ENCODE measurements at regions of chr7 and their contacts with region 1.

Region 1: DNA sequence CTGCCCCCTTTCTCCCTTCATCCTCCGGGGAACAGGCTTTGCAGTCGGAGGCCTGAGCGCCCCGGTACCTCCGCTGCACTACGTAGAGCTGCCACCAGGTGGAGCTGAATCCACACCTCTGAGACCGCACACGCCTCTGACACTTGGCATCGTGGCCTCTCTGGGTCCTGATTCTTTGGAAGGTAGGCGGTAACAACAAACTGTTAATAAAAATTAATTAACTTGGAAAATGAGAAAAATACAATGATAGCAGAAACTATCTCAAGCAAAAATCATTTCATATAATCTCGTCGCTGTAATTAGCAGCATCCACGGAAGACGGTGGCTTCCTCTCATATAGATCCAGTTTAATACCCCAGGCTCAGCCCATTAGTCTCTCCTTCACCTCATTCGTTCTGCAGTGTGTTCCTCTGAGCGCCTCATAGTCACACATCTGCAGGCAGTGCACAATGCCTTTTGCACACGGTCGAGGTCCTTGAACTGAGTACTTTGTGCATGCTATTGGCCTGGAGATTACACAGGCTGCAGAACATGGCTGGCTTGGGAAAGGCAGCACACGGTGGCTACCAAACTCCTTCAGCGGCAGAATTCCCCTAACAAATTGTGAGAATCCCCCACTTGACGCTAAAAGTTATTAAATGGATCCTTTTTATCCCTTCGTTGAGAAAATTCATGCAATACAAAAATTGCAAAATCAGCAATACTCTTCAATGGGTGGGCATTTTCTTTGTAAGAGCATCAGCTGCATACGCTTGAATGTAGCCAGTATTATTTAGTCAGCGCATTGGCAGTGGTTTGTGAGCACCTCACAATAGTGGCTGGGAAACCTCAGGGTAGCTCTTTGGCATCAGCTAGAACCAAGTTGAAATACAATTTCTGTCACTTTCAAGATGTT is 18.7 kb downstream of the OR9A2 start:
- DNase-seq: peak; percentile 9
- ATAC-seq: peak; percentile 95
- H3K4me3 ChIP-seq: no peak overlapping the region
- H3K27ac ChIP-seq: no peak overlapping the region
- H3K4me1 ChIP-seq: no peaks in the 10 kb centered on the region
- H3K27me3 ChIP-seq: no peaks in the 10 kb centered on the region; a peak in 1 of 4 replicates
- CTCF ChIP-seq: peak; percentile 92 to 97 (median 94)
- EP300 ChIP-seq: no peak
- POLR2A ChIP-seq: no peak
- RAD21 ChIP-seq: peak; percentile 97

Region 2: DNA sequence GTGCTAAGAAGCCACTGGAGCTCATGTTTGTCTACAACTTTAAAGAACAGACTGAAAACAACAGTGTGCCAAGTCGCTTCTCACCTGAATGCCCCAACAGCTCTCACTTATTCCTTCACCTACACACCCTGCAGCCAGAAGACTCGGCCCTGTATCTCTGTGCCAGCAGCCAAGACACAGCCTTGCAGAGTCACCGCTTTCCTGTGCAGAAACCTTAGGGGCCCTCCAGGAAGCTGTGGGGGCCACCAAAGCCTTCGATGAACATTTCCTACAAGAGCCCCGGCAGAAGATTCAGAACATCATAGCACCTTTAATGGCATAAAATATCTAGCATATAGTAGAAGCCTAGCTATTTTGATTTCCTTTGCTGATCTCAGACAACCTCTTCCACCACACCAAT is 662.4 kb before region 1 on chr7:
- CTCF ChIA-PET with region 1: no interaction called
- POLR2A ChIA-PET with region 1: no interaction called
- RAD21 ChIA-PET with region 1: no interaction called
- SMC1A ChIA-PET with region 1: no interaction called
- in situ Hi-C with region 1: no loop called
- intact Hi-C with region 1: no loop called
- DNase-seq: no peak
- ATAC-seq: no peak
- H3K4me3 ChIP-seq: no peak overlapping the region
- H3K27ac ChIP-seq: no peak overlapping the region
- H3K4me1 ChIP-seq: no peaks in the 10 kb centered on the region
- H3K27me3 ChIP-seq: peaks cover 4 to 7% of the 10 kb centered on the region in 2 experiments; a peak in 3 of 4 replicates
- CTCF ChIP-seq: no peak
- EP300 ChIP-seq: no peak
- POLR2A ChIP-seq: no peak
- RAD21 ChIP-seq: no peak

Region 3: DNA sequence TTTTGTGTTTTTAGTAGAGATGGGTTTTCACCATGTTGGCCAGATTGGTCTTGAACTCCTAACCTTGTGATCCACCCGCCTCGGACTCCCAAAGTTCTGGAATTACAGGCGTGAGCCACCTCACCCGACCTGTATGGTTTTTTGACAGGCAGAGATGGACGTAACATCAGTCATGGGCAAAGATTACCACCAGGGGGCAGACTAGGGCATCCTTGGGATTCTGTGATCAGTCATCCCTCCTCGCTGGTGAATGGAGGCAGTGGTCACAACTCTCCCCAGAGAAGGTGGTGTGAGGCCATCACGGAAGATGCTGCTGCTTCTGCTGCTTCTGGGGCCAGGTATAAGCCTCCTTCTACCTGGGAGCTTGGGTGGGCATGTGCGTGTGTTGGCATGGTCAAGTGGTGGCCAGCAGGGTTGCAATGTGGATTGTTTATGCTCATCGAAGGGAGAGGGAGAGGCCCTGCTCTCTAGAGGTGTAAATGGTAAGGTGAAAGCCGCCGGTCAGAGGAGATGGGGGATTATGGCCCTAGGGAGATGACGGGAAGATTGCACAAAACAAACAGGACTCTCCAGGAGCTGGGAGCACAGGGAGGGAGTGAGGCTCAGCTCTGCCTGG is 381.7 kb before region 1 on chr7:
- CTCF ChIA-PET with region 1: interaction called, 56 read pairs
- POLR2A ChIA-PET with region 1: no interaction called
- RAD21 ChIA-PET with region 1: interaction called, 5 read pairs
- SMC1A ChIA-PET with region 1: interaction called, 23 read pairs
- in situ Hi-C with region 1: loop called (anchors 5 kb)
- intact Hi-C with region 1: no loop called
- DNase-seq: no peak
- ATAC-seq: peak; percentile 96
- H3K4me3 ChIP-seq: no peak overlapping the region
- H3K27ac ChIP-seq: no peak overlapping the region
- H3K4me1 ChIP-seq: no peaks in the 10 kb centered on the region
- H3K27me3 ChIP-seq: peaks cover 0 to 3% of the 10 kb centered on the region in 2 experiments; a peak in 1 of 4 replicates
- CTCF ChIP-seq: peak; percentile 56 to 79 (median 69)
- EP300 ChIP-seq: no peak
- POLR2A ChIP-seq: no peak
- RAD21 ChIP-seq: peak; percentile 37

Region 4: DNA sequence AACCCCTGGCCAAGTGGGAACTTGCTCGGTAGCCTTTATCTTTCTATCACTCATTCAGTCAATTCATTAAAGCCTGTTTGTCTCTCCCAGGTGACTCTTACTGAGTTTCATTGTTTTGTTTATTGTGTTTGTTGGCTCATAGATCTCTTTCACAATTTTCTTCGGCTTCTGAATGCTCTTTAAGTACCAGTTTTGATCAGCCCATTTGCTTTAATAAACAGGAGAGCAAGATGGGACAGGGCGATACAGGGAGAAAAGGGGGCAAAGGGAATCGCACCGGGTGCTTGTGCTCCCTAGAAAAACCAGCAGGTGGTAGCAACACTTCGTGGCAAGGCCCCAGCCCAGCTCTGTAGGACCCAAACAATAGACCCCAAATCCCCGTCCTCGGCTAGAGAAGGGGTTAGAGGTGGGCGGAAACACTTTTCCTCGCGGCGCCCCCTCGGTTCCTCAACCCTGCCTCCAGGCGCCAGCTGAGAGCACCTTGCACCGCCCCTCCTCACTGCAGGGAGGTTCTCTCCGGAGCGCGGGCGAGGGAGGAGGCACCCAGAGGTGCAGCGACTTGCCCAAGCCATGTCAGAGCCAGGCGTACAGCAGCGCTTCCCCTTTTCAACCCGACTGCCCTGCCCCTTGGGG is 154.4 kb before region 1 on chr7:
- CTCF ChIA-PET with region 1: interaction called, 20 read pairs
- POLR2A ChIA-PET with region 1: no interaction called
- RAD21 ChIA-PET with region 1: interaction called, 7 read pairs
- SMC1A ChIA-PET with region 1: interaction called, 6 read pairs
- in situ Hi-C with region 1: no loop called
- intact Hi-C with region 1: loop called (anchors 1 kb)
- DNase-seq: no peak
- ATAC-seq: peak; percentile 92
- H3K4me3 ChIP-seq: peak overlapping the region; percentile 96
- H3K27ac ChIP-seq: no peak overlapping the region
- H3K4me1 ChIP-seq: no peaks in the 10 kb centered on the region
- H3K27me3 ChIP-seq: peaks cover 0 to 8% of the 10 kb centered on the region in 2 experiments
- CTCF ChIP-seq: peak; percentile 75 to 83 (median 81)
- EP300 ChIP-seq: no peak
- POLR2A ChIP-seq: no peak
- RAD21 ChIP-seq: peak; percentile 71

Region 5: DNA sequence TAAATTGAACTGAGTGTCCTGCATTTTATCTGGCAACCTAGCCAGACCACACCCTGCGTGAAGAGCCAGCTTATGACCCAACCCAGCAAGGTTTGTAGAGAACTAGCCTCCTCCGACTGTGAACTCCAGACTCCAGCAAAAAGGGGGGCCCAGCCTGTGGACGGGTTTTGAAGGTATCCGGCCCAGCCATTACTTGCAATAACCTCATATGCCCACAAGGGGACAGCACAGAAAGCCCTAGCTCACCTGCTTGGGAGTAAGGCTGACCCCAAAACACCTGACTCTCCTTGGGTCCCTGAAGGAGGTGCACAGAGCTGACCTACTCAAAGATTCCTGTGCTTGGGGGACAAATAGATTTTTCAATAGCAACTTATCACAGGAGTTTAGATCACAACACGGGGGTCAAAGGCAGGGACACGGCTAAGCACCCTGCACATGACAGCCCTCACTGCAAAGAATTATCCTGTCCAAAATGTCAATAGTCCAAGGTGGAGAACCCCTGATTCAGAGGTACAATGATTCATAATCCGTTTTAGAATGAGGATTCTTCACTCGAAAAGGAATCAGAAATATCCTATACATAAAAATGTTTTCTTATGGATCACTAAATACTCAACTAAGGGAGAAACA is 127.3 kb before region 1 on chr7:
- CTCF ChIA-PET with region 1: interaction called, 123 read pairs
- POLR2A ChIA-PET with region 1: no interaction called
- RAD21 ChIA-PET with region 1: interaction called, 6 read pairs
- SMC1A ChIA-PET with region 1: interaction called, 39 read pairs
- in situ Hi-C with region 1: no loop called
- intact Hi-C with region 1: loop called (anchors 2 kb)
- DNase-seq: no peak
- ATAC-seq: peak; percentile 87
- H3K4me3 ChIP-seq: no peak overlapping the region
- H3K27ac ChIP-seq: no peak overlapping the region
- H3K4me1 ChIP-seq: no peaks in the 10 kb centered on the region
- H3K27me3 ChIP-seq: 0 out of 4 replicates have a peak, but pooled peaks cover 0 to 2% of the 10 kb centered on the region in 2 experiments
- CTCF ChIP-seq: peak; percentile 77 to 94 (median 89)
- EP300 ChIP-seq: no peak
- POLR2A ChIP-seq: no peak
- RAD21 ChIP-seq: peak; percentile 55

Region 6: GRCh38 chr7:142930126-142930730 is 78.0 kb before region 1 on chr7:
- CTCF ChIA-PET with region 1: no interaction called
- POLR2A ChIA-PET with region 1: no interaction called
- RAD21 ChIA-PET with region 1: no interaction called
- SMC1A ChIA-PET with region 1: no interaction called
- in situ Hi-C with region 1: no loop called
- intact Hi-C with region 1: no loop called
- DNase-seq: no peak
- ATAC-seq: no peak
- H3K4me3 ChIP-seq: no peak overlapping the region
- H3K27ac ChIP-seq: no peak overlapping the region
- H3K4me1 ChIP-seq: no peaks in the 10 kb centered on the region
- H3K27me3 ChIP-seq: no peaks in the 10 kb centered on the region; a peak in 2 of 4 replicates
- CTCF ChIP-seq: no peak
- EP300 ChIP-seq: no peak
- POLR2A ChIP-seq: no peak
- RAD21 ChIP-seq: no peak

Region 7: DNA sequence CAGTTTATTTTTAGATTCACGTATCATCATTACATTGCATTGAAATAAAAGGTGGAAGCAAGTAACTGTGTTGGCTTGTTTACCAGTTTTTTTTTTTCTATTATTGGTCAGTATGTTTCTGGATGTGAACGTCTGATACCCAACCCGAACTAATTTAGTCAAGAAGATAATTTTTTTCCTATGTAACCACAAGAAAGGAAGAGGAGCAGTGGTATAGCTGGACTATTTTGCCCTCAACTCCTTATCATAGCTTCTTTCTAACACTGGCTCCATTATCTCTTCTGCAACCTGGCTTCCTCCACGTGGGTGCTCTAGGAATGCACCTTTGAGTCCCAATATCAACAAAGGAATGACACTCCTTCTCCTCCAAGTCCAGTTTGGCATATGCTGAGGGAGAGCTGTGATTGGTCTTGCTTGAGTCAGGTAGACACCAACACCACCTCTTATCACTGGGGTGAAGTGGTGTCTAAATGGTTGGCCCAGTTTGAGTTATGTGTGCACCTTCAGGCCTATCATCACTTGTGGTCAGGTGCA is 10.7 kb before region 1 on chr7:
- CTCF ChIA-PET with region 1: interaction called, 75 read pairs
- POLR2A ChIA-PET with region 1: no interaction called
- RAD21 ChIA-PET with region 1: interaction called, 3 read pairs
- SMC1A ChIA-PET with region 1: interaction called, 54 read pairs
- in situ Hi-C with region 1: no loop called
- intact Hi-C with region 1: no loop called
- DNase-seq: no peak
- ATAC-seq: no peak
- H3K4me3 ChIP-seq: no peak overlapping the region
- H3K27ac ChIP-seq: no peak overlapping the region
- H3K4me1 ChIP-seq: no peaks in the 10 kb centered on the region
- H3K27me3 ChIP-seq: no peaks in the 10 kb centered on the region
- CTCF ChIP-seq: no peak
- EP300 ChIP-seq: no peak
- POLR2A ChIP-seq: no peak
- RAD21 ChIP-seq: no peak

Region 8: GRCh38 chr7:143223784-143224183 is 215.5 kb after region 1 on chr7:
- CTCF ChIA-PET with region 1: interaction called, 434 read pairs
- POLR2A ChIA-PET with region 1: no interaction called
- RAD21 ChIA-PET with region 1: interaction called, 10 read pairs
- SMC1A ChIA-PET with region 1: interaction called, 191 read pairs
- in situ Hi-C with region 1: loop called (anchors 5 kb)
- intact Hi-C with region 1: no loop called
- DNase-seq: no peak
- ATAC-seq: no peak
- H3K4me3 ChIP-seq: no peak overlapping the region
- H3K27ac ChIP-seq: no peak overlapping the region
- H3K4me1 ChIP-seq: no peaks in the 10 kb centered on the region
- H3K27me3 ChIP-seq: peaks cover 0 to 6% of the 10 kb centered on the region in 2 experiments
- CTCF ChIP-seq: no peak
- EP300 ChIP-seq: no peak
- POLR2A ChIP-seq: no peak
- RAD21 ChIP-seq: no peak